Activated CD8-positive, alpha-beta T cell treated with anti-CD3 and anti-CD28 coated beads for 36 hours (primary cell): ENCODE measurements at regions of chr18 and their contacts with region 1.

Region 1: GRCh38 chr18:68648191-68648590 is 66.7 kb downstream of the TMX3 start:
- DNase-seq: no peak
- ATAC-seq: no peak
- H3K4me3 Mint-ChIP-seq: no peak overlapping the region
- H3K27ac Mint-ChIP-seq: no peak overlapping the region
- H3K4me1 Mint-ChIP-seq: no peaks in the 10 kb centered on the region
- H3K27me3 Mint-ChIP-seq: peaks cover 9% of the 10 kb centered on the region
- CTCF ChIP-seq: no peak

Region 2: DNA sequence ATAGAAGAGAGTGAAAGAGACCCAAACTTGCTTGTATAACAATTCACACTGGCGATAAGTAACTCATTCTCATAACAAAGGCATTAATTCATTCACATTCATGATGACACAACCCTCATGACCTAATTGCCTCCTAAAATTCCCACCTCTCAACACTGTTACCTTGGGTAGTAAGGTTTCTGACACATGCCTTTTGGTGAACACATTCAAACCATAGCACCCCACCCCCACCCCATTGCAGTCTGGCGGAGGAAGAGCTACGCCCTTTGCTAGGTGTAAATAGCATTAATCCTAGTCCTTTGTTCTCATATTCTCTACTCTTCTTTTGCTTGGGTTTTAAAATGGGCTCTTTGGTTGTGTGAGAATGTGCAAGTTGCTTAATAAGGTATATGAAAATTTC is 1493.2 kb before region 1 on chr18:
- CTCF ChIA-PET with region 1: no interaction called
- POLR2A ChIA-PET with region 1: no interaction called
- intact Hi-C with region 1: no loop called
- DNase-seq: no peak
- ATAC-seq: no peak
- H3K4me3 Mint-ChIP-seq: no peak overlapping the region
- H3K27ac Mint-ChIP-seq: no peak overlapping the region
- H3K4me1 Mint-ChIP-seq: no peaks in the 10 kb centered on the region
- H3K27me3 Mint-ChIP-seq: no peaks in the 10 kb centered on the region
- CTCF ChIP-seq: no peak

Region 3: DNA sequence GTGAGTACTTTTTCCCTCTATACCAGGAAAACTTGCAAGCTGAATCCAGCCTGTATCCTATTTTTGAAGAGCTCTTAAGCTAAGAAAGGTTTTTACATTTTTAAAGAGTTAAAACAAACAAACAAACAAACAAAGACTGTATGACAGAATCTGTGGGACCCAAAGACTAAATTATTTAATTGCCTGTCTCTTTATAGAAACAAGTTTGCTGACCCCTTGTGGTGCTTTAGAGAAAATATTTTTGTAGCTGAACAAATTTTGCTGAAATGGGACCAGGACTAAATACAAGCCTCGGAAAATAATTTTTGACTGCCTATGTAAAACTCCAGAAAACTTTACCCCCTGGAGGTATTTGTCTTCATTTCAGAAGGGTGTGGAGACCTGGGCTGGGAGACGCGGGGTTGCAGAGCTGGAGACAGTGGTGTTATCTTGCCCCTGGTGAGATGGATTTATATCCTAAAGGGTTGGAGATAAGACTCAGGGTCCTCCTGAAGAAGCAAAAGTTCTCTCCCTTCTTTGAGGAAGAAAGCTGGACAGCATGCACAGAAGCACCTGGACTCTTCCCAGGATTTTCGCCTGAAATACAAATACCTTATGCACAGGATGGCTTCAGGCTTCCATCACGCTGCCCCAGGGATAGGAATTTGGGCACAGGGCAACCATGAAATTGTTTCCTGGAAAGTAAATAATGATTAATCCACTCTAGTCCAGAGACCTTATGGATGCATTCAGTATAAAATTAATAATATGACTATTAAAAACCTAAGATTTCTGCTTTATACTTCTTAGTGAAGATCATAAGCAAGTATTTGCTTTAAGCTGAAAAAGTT is 12.4 kb after region 1 on chr18:
- CTCF ChIA-PET with region 1: interaction called, 14 read pairs
- POLR2A ChIA-PET with region 1: no interaction called
- intact Hi-C with region 1: no loop called
- DNase-seq: no peak
- ATAC-seq: no peak
- H3K4me3 Mint-ChIP-seq: no peak overlapping the region
- H3K27ac Mint-ChIP-seq: no peak overlapping the region
- H3K4me1 Mint-ChIP-seq: no peaks in the 10 kb centered on the region
- H3K27me3 Mint-ChIP-seq: peaks cover 2% of the 10 kb centered on the region
- CTCF ChIP-seq: peak; percentile 70

Region 4: DNA sequence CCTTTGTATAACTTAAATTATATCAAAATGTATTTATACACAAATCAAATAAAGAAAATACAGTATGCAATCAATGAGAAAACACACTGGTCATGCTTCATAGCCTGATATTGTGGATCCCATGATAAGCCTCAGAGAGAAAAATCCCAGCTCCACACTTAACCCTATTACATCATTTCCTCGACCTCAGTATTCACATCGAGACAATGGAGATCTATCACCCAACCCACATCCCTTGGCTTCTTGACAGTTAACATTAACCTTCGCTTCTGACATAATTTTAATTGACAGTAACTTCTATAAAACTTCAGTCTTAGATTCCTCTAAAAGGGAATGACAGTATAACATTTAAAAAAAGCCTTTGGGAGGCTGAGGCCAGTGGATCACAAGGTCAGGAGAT is 55.1 kb after region 1 on chr18:
- CTCF ChIA-PET with region 1: no interaction called
- POLR2A ChIA-PET with region 1: no interaction called
- intact Hi-C with region 1: no loop called
- DNase-seq: no peak
- ATAC-seq: no peak
- H3K4me3 Mint-ChIP-seq: no peak overlapping the region
- H3K27ac Mint-ChIP-seq: peak overlapping the region; percentile 30
- H3K4me1 Mint-ChIP-seq: peaks cover 39% of the 10 kb centered on the region
- H3K27me3 Mint-ChIP-seq: no peaks in the 10 kb centered on the region
- CTCF ChIP-seq: no peak